Mammary epithelial cell (primary cell): ENCODE measurements at regions of chr6 and their contacts with region 1.

Region 1: GRCh38 chr6:43774776-43775534 is 4.9 kb downstream of the VEGFA start:
- DNase-seq: peak; percentile 69
- H3K4me3 ChIP-seq: peak overlapping the region; percentile 97 to 98 (median 98)
- H3K27ac ChIP-seq: peak overlapping the region; percentile 14
- H3K4me1 ChIP-seq: peaks cover 22% of the 10 kb centered on the region
- H3K27me3 ChIP-seq: no peaks in the 10 kb centered on the region
- CTCF ChIP-seq: peak; percentile 83 to 94

Region 2: GRCh38 chr6:43667245-43668150 is 107.5 kb before region 1 on chr6:
- CTCF ChIA-PET with region 1: no interaction called
- dilution Hi-C with region 1: loop called (anchors 5 kb)
- in situ Hi-C with region 1: loop called in 1 of 2 experiments (anchors 10 kb)
- intact Hi-C with region 1: loop called (anchors 1 kb)
- DNase-seq: peak; percentile 69
- H3K4me3 ChIP-seq: no peak overlapping the region
- H3K27ac ChIP-seq: peak overlapping the region; percentile 2
- H3K4me1 ChIP-seq: peaks cover 47% of the 10 kb centered on the region
- H3K27me3 ChIP-seq: no peaks in the 10 kb centered on the region
- CTCF ChIP-seq: peak; percentile 96 to 98

Region 3: DNA sequence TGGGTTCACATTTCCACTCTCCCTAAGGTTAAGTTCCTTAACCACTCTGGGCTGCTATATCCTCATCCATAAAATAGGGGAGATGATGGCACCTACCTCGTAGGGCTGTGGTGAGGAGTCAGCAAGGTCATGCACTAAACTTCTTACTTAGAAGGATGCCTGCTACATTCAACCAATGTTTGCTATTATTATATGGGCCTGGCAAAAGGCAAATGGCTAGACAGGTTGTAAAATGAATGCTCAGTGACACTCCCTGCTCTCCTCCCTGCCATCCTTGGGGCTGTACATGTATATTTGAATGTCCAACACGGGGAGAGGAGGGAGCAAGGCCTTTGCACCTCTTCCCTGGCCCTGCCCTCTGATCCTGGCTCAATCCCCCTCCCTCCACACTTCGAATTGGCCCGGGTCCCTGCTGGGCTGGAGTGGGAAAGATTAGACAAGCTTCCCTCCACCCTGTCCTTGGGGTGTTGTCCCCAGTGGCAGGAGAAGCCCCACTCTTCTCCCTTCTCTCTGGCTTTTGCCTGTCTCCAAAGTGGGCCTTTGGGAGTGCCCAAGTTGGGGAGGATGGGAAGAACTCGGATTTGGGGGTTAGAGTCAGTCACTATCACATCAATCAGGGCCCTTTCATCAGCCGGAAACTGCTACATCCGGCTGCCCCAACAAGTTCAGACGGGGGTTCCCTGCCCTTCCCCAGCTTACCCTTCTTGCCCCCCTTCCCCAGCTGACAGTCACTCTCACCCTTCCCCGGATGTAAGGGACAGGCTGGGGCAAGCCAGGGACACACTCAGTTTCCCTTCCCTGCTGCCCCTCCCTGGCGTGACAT is 41.3 kb before region 1 on chr6:
- CTCF ChIA-PET with region 1: no interaction called
- dilution Hi-C with region 1: loop called (anchors 5 kb)
- in situ Hi-C with region 1: no loop called
- intact Hi-C with region 1: no loop called
- DNase-seq: peak; percentile 46
- H3K4me3 ChIP-seq: no peak overlapping the region
- H3K27ac ChIP-seq: peak overlapping the region; percentile 16
- H3K4me1 ChIP-seq: peaks cover 52% of the 10 kb centered on the region
- H3K27me3 ChIP-seq: no peaks in the 10 kb centered on the region
- CTCF ChIP-seq: no peak

Region 4: DNA sequence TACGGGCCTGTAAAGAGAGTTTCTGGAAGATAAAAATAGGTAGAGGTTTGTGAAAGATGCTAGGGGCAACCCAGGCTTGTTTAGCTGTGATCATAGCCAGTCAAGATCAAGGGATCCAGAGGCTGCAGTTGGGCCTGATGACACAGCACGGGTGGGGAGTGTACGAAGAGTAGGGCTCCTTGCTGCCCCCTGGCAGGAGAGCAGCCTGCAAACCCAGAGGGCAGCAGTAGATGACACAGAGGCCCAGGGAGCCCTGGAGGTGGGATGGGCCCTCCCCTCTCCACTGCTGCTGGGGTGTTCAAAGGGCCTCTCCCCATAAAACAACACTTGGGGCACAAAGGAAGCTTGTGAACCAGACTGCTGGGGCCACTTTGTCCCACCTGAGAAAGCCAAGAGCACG is 42.2 kb after region 1 on chr6:
- CTCF ChIA-PET with region 1: no interaction called
- dilution Hi-C with region 1: loop called (anchors 5 kb)
- in situ Hi-C with region 1: no loop called
- intact Hi-C with region 1: no loop called
- DNase-seq: peak; percentile 14
- H3K4me3 ChIP-seq: no peak overlapping the region
- H3K27ac ChIP-seq: no peak overlapping the region
- H3K4me1 ChIP-seq: peaks cover 6% of the 10 kb centered on the region
- H3K27me3 ChIP-seq: no peaks in the 10 kb centered on the region
- CTCF ChIP-seq: peak in 1 of 2 donors; percentile 36

Region 5: GRCh38 chr6:43838276-43839036 is 63.5 kb after region 1 on chr6:
- CTCF ChIA-PET with region 1: no interaction called
- dilution Hi-C with region 1: no loop called
- in situ Hi-C with region 1: no loop called
- intact Hi-C with region 1: loop called (anchors 1 kb)
- DNase-seq: peak; percentile 20
- H3K4me3 ChIP-seq: no peak overlapping the region
- H3K27ac ChIP-seq: no peak overlapping the region
- H3K4me1 ChIP-seq: peaks cover 9% of the 10 kb centered on the region
- H3K27me3 ChIP-seq: no peaks in the 10 kb centered on the region
- CTCF ChIP-seq: peak; percentile 33 to 59

Region 6: GRCh38 chr6:43926634-43927524 is 151.9 kb after region 1 on chr6:
- CTCF ChIA-PET with region 1: interaction called, 3 read pairs
- dilution Hi-C with region 1: no loop called
- in situ Hi-C with region 1: no loop called
- intact Hi-C with region 1: loop called (anchors 2 kb)
- DNase-seq: peak; percentile 93
- H3K4me3 ChIP-seq: no peak overlapping the region
- H3K27ac ChIP-seq: peak overlapping the region; percentile 69
- H3K4me1 ChIP-seq: peaks cover 45% of the 10 kb centered on the region
- H3K27me3 ChIP-seq: no peaks in the 10 kb centered on the region
- CTCF ChIP-seq: peak; percentile 8 to 54

Region 7: DNA sequence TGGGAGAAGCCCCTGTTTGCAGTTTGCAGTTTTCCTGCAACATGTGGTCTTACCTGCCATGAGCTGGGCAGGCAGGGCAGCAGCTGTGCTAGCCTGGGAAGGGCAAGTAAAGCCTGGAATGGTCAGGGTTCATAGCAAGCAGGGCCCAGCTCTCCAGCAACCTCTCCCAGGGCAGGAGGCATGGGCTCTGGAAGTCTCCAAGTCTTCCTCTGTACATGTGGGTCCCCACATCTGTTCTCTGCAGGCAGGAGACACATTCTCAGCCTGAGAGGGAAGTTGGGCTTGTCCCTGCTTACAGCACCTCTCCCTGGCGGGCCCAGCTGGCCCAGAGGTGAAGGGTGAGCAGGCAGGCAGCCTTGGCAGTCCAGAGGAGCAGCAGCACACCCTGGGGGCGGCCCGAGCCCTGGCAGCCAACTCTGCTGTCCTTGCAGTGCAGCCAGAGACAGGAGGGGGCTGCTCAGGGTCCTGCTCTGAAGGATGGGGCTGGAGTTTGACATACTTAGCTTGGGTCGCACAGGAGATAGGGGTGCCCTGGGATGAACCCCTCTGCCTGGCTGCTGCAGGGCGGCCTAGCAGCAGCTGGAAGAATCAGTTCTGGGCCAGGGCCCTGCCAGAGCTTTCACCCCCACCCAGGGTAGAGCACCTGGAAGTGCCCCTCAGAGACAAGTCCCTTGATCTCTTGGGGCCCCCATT is 176.3 kb after region 1 on chr6:
- CTCF ChIA-PET with region 1: no interaction called
- dilution Hi-C with region 1: no loop called
- in situ Hi-C with region 1: no loop called
- intact Hi-C with region 1: no loop called
- DNase-seq: no peak
- H3K4me3 ChIP-seq: no peak overlapping the region
- H3K27ac ChIP-seq: no peak overlapping the region
- H3K4me1 ChIP-seq: no peaks in the 10 kb centered on the region
- H3K27me3 ChIP-seq: no peaks in the 10 kb centered on the region
- CTCF ChIP-seq: peak; percentile 17 to 40

Region 8: DNA sequence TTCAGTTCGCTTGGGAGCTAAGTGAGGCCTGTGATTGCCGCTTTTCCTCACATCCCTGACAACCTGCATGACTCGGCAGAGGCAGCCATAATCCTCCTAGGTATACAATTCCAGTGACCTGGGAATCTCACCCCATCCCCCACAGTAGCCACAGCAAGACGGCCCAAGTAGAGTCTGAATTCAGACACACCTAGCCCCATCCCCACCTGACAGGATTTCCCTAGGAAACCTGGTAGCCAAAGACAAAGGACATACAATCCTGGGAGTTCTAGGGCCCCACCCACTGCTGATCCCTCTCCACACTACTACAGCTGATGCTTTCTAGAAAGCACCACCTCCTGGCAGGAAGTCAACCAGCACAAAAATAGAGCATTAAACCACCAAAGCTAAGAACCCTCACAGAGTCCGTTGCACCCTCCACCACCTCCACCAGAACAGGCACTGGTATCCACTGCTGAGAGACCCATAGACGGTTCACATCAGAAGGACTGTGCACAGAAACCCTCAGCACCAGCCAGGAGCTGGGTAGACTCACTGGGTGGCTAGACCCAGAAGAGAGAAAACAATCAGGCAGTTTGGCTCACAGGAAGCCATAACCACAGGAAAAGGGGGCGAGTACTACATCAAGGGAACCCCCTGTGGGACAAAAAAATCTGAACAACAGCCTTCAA is 1535.3 kb after region 1 on chr6:
- CTCF ChIA-PET with region 1: no interaction called
- dilution Hi-C with region 1: no loop called
- in situ Hi-C with region 1: no loop called
- intact Hi-C with region 1: no loop called
- DNase-seq: no peak
- H3K4me3 ChIP-seq: no peak overlapping the region
- H3K27ac ChIP-seq: no peak overlapping the region
- H3K4me1 ChIP-seq: no peaks in the 10 kb centered on the region
- H3K27me3 ChIP-seq: no peaks in the 10 kb centered on the region
- CTCF ChIP-seq: no peak